ENCODE measurements at regions of chr15 and their contacts with region 1.

Region 1: GRCh38 chr15:40367686-40368611 is 9.9 kb downstream of the DISP2 start:
- DNase-seq: peak; percentile 91
- H3K4me3 Mint-ChIP-seq: peak overlapping the region; percentile 75
- H3K27ac Mint-ChIP-seq: no peak overlapping the region
- H3K4me1 Mint-ChIP-seq: peaks cover 11% of the 10 kb centered on the region
- H3K27me3 Mint-ChIP-seq: no peaks in the 10 kb centered on the region

Region 2: DNA sequence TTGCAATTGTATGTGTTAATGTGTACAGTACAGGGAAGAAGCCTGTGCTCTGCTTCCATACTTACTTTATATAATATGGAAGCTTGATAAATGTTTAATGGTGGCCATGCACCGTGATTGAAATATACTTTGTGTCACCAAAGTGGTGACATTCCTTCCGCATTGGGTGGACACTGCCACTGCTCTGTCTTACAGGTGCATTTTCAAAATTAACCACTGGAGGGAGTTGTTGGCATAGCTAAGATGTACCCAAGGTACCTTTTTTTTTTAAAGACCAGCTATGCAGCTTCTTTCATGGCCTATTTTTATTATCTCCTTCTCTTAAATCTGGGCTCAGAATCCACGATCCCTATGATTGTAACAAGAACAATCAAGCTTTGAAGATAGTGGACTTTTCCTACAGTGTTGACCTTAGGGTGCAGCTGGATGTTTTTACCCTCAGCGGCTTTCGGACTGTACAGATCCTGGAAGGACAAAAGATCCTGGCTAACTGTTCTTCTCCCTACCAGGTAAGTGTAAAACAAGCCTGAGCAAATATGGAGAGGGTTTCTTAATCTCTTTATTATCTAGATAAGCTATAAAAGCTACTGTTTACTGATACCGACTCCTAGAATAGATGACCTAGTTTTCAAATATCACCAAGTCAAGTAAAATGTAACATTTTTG is 150.7 kb before region 1 on chr15:
- CTCF ChIA-PET with region 1: no interaction called
- intact Hi-C with region 1: no loop called
- DNase-seq: peak; percentile 47
- H3K4me3 Mint-ChIP-seq: no peak overlapping the region
- H3K27ac Mint-ChIP-seq: no peak overlapping the region
- H3K4me1 Mint-ChIP-seq: no peaks in the 10 kb centered on the region
- H3K27me3 Mint-ChIP-seq: no peaks in the 10 kb centered on the region

Region 3: GRCh38 chr15:40238532-40239403 is 129.2 kb before region 1 on chr15 and contains the start of gene PAK6:
- CTCF ChIA-PET with region 1: no interaction called
- intact Hi-C with region 1: no loop called
- DNase-seq: peak; percentile 64
- H3K4me3 Mint-ChIP-seq: no peak within 1 kb of the TSS
- H3K27ac Mint-ChIP-seq: no peak within 1 kb of the TSS
- H3K4me1 Mint-ChIP-seq: peaks cover 11% of the 10 kb centered on the region
- H3K27me3 Mint-ChIP-seq: peaks cover 14% of the 10 kb centered on the region
- total RNA-seq, gene PAK6: not detected

Region 4: GRCh38 chr15:40357723-40358470 is 10.1 kb before region 1 on chr15 and contains the start of gene DISP2:
- CTCF ChIA-PET with region 1: interaction called, 4 read pairs
- intact Hi-C with region 1: loop called (anchors 1 kb)
- DNase-seq: peak; percentile 90
- H3K4me3 Mint-ChIP-seq: peak within 1 kb of the TSS; percentile 72
- H3K27ac Mint-ChIP-seq: no peak within 1 kb of the TSS
- H3K4me1 Mint-ChIP-seq: peaks cover 2% of the 10 kb centered on the region
- H3K27me3 Mint-ChIP-seq: peaks cover 5% of the 10 kb centered on the region
- total RNA-seq, gene DISP2: 0.02 TPM in 1 of 2 experiments, not detected in the other

Region 5: GRCh38 chr15:40382580-40383456 is 14.9 kb after region 1 on chr15 and contains the start of gene KNSTRN:
- CTCF ChIA-PET with region 1: interaction called, 7 read pairs
- intact Hi-C with region 1: loop called (anchors 1 kb)
- DNase-seq: peak; percentile 97
- H3K4me3 Mint-ChIP-seq: peak within 1 kb of the TSS; percentile 94
- H3K27ac Mint-ChIP-seq: peak within 1 kb of the TSS; percentile 72
- H3K4me1 Mint-ChIP-seq: peaks cover 18% of the 10 kb centered on the region
- H3K27me3 Mint-ChIP-seq: no peaks in the 10 kb centered on the region
- total RNA-seq, gene KNSTRN: 60.7 to 62.1 TPM

Region 6: DNA sequence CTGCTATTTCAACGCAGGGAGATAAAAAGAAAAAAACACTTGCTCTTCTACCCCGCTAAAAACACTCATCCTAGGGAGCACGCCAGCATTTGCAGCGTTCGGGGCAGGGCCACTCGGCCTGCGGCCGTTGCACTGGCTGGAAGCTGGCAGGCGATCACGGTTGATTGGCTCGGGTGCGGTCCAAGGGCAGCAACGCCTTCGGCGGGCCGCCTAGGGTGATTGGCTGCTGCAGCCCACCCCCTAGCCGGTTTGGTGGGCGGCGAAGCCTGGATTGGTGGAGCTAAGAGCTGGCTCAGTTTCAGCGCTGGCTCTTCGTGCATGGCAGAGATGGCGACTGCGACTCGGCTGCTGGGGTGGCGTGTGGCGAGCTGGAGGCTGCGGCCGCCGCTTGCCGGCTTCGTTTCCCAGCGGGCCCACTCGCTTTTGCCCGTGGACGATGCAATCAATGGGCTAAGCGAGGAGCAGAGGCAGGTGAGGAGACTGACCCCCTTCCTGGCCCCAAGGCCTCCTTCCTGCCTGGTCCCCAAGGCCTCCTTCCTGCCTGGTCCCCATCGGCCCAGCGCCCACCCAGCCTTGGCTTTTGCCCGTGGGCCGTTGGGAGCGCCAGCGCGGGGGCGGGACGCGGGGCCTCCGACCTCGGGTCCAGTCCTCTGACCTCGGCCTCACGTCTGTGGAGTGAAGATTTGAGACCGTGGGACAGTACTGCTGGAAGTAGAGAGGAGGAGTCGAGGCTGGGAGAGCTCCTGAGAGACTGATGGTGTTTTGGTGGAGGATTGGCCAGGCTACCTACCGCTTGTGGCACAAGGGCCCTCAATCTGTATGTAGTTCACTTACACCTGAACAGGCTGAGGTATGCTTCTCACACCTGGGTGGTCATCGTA is 37.8 kb after region 1 on chr15 and contains the start of gene IVD:
- CTCF ChIA-PET with region 1: interaction called, 13 read pairs
- intact Hi-C with region 1: loop called (anchors 1 kb)
- DNase-seq: peak; percentile 94
- H3K4me3 Mint-ChIP-seq: peak within 1 kb of the TSS; percentile 83
- H3K27ac Mint-ChIP-seq: peak within 1 kb of the TSS; percentile 71
- H3K4me1 Mint-ChIP-seq: peaks cover 56% of the 10 kb centered on the region
- H3K27me3 Mint-ChIP-seq: no peaks in the 10 kb centered on the region
- total RNA-seq, gene IVD: 33.1 to 34.1 TPM

Region 7: DNA sequence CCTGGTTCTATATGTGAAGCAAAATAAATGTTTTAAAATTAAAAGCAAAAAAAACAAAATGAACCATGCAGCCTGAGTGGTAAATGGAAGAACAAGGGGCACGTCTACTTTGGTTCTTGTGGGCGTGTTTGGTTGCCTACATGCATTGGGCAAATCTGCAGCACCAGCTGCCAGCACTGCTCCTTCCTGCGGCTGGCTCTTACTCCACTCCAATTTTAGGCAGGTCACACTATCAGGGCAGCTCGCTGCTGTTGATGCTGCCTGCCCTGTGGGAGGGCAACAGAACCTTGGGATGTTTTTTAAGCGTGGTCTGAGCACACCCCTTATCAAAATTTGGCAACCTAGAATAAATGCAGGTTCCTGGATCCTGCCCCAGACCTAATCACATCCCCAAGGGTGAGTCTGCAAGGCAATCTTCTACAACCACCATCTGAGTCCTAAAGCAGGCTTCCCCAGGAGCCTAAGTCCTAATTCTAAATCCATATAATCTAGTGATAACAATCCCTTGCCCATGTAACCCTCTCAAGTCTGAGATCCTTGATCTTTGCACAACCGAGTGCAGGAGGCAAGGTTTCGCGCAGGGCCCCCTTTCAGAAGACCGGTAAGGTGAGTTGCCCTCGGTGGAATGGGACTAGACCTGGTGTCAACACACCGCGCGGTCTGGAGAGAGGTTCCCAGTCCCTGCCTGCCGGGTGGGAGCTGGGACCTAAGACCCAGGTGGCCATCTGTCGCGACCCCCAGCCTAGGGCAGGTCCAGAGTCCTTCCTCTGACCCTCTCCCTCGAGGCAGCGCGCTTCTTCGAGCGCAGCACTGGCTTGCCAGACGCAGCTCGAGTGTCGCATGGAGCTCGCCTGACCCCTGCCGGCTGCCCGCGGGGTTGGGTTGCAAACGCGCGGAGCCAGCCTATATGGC is 53.6 kb after region 1 on chr15:
- CTCF ChIA-PET with region 1: interaction called, 50 read pairs
- intact Hi-C with region 1: loop called (anchors 1 kb)
- DNase-seq: peak; percentile 90
- H3K4me3 Mint-ChIP-seq: no peak overlapping the region
- H3K27ac Mint-ChIP-seq: no peak overlapping the region
- H3K4me1 Mint-ChIP-seq: no peaks in the 10 kb centered on the region
- H3K27me3 Mint-ChIP-seq: no peaks in the 10 kb centered on the region

Region 8: GRCh38 chr15:40463886-40464545 is 96.1 kb after region 1 on chr15:
- CTCF ChIA-PET with region 1: no interaction called
- intact Hi-C with region 1: no loop called
- DNase-seq: no peak
- H3K4me3 Mint-ChIP-seq: no peak overlapping the region
- H3K27ac Mint-ChIP-seq: no peak overlapping the region
- H3K4me1 Mint-ChIP-seq: peaks cover 30% of the 10 kb centered on the region
- H3K27me3 Mint-ChIP-seq: no peaks in the 10 kb centered on the region

Region 9: GRCh38 chr15:40506964-40507571 is 139.1 kb after region 1 on chr15:
- CTCF ChIA-PET with region 1: no interaction called
- intact Hi-C with region 1: loop called (anchors 2 kb)
- DNase-seq: peak; percentile 75
- H3K4me3 Mint-ChIP-seq: no peak overlapping the region
- H3K27ac Mint-ChIP-seq: no peak overlapping the region
- H3K4me1 Mint-ChIP-seq: peaks cover 9% of the 10 kb centered on the region
- H3K27me3 Mint-ChIP-seq: peaks cover 34% of the 10 kb centered on the region